Right lobe of liver (tissue), 6 donors: ENCODE measurements at regions of chr4 and their contacts with region 1.

Region 1: GRCh38 chr4:6327041-6327917 is 57.6 kb downstream of the WFS1 start:
- DNase-seq: peak; percentile 85 to 87 (median 86)
- ATAC-seq: peak; percentile 83 to 94 (median 91)
- H3K4me3 ChIP-seq: no peak overlapping the region
- H3K27ac ChIP-seq: no peak overlapping the region
- H3K4me1 ChIP-seq: no peaks in the 10 kb centered on the region
- H3K27me3 ChIP-seq: no peaks in the 10 kb centered on the region
- CTCF ChIP-seq: peak; percentile 93 to 97 (median 96)
- POLR2A ChIP-seq: no peak

Region 2: DNA sequence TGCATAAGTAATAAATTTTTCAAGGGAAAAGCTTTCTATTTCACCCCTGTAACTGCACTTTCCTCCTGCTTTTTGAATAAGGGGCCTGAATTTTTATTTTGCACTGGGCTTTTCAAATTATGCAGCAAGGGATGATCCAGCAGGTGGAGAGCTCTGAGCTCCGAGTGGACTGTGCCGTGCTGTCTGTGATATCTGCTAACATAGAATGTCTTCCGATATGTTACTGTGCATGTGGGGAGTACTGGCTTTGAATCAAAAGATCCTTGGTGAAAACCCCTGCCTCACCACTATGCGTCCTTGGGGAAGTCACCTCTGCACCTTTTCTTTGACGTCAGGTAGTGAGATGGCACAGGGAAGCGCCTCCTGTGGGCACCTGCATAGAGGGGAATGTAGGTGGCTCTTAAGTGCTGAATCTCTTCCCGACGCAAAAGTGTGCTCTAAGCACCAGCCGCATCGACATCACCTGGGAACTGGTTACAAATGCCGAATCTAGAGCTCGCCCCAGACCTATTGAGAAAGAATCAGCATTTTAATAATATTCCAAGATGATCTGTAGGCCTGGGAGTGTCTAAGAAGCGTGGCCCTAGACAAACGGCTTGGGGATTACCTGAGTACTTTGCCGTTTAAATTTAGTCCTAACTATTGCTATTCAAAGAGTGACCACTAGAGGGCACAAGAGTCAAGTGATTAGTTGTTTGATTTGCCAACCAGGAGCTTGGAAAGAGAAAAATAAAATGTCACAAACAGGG is 76.9 kb before region 1 on chr4:
- intact Hi-C with region 1: loop called (anchors 5 kb)
- DNase-seq: no peak
- ATAC-seq: peak; percentile 74 to 89 (median 81)
- H3K4me3 ChIP-seq: no peak overlapping the region
- H3K27ac ChIP-seq: no peak overlapping the region
- H3K4me1 ChIP-seq: no peaks in the 10 kb centered on the region
- H3K27me3 ChIP-seq: peaks cover 0 to 5% of the 10 kb centered on the region in 2 donors
- CTCF ChIP-seq: peak; percentile 80 to 91 (median 84)
- POLR2A ChIP-seq: no peak

Region 3: DNA sequence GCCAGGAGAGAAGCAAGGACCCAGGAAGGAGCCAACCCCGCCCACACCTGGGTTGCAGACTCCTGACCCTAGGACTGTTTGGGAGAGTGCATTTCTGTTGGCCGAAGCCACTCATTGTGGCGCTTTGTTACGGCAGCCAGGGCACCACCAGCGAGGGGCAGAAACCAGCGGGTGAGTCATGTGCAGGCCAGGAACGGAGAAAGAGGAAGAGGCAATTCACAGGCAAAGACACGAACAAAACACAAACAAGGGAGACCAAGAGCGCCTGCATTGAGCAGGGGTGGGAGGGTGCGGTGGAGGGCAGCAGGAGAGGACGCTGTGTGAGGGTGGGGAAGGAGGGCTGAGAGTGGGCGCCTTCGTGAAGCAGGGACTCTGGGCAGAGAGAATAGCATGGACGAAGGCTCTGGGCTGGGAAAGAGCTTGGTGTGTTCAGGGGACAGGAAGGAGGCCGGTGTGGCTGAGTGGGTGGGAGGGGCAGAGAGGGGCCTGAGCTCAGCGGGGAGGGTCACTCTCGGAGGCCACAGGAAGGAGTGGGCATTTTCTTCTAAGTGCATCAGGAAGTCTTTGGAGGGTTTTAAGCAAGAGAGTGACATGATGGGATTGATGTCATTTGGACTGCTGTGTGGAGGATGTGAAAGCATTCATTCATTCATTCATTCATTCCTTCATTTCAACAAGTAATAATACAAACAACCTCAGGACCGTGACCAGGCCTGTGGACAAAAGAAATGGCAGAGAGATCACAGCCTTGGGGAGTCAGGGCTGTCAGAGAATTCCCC is 69.8 kb before region 1 on chr4:
- intact Hi-C with region 1: loop called (anchors 5 kb)
- DNase-seq: no peak
- ATAC-seq: peak; percentile 28 to 54 (median 44)
- H3K4me3 ChIP-seq: no peak overlapping the region
- H3K27ac ChIP-seq: no peak overlapping the region
- H3K4me1 ChIP-seq: no peaks in the 10 kb centered on the region
- H3K27me3 ChIP-seq: no peaks in the 10 kb centered on the region
- CTCF ChIP-seq: no peak
- POLR2A ChIP-seq: no peak